ENCODE measurements at regions of chr1 and their contacts with region 1.

Region 1: GRCh38 chr1:205711104-205712020 is 31.1 kb upstream of the SLC45A3 start:
- DNase-seq: peak; percentile 62
- ATAC-seq: peak; percentile 99
- H3K4me3 ChIP-seq: no peak overlapping the region
- H3K27ac ChIP-seq: no peak overlapping the region
- H3K4me1 ChIP-seq: no peaks in the 10 kb centered on the region
- H3K27me3 ChIP-seq: no peaks in the 10 kb centered on the region
- CTCF ChIP-seq: peak; percentile 77 to 95 (median 92)
- EP300 ChIP-seq: no peak
- POLR2A ChIP-seq: no peak
- RAD21 ChIP-seq: peak; percentile 91

Region 2: GRCh38 chr1:205591522-205592351 is 119.6 kb before region 1 on chr1:
- CTCF ChIA-PET with region 1: interaction called, 217 read pairs
- POLR2A ChIA-PET with region 1: interaction called, 6 read pairs
- RAD21 ChIA-PET with region 1: interaction called, 88 read pairs
- SMC1A ChIA-PET with region 1: interaction called, 159 read pairs
- in situ Hi-C with region 1: loop called (anchors 5 kb)
- intact Hi-C with region 1: loop called (anchors 1 kb)
- DNase-seq: peak; percentile 59
- ATAC-seq: peak; percentile 79
- H3K4me3 ChIP-seq: peak overlapping the region; percentile 66; the same call in 1 of the 2 replicates
- H3K27ac ChIP-seq: peak overlapping the region; percentile 71
- H3K4me1 ChIP-seq: peaks cover 36% of the 10 kb centered on the region
- H3K27me3 ChIP-seq: no peaks in the 10 kb centered on the region
- CTCF ChIP-seq: peak; percentile 98 to 99 (median 99); a peak in 5 of 6 replicates
- EP300 ChIP-seq: no peak
- POLR2A ChIP-seq: peak; percentile 69
- RAD21 ChIP-seq: peak; percentile 96

Region 3: DNA sequence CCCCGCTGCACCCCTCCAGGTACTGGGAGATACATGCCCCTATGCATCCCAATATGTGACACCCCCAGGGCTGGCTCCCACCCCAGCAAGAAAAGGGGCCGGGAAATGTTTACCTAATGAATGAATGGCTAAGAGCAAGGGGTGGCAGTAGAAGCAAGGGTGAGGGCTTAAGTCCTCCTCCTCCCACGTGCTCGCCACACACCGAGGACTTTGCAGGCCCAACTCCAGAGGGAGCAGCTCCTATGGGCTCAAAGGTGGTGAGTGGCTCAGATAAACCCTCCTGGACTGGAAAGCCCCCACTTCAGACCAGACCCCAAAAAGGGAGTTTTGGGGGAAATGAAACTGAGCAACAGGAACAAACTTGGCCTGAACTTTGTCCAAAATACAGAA is 42.4 kb before region 1 on chr1:
- CTCF ChIA-PET with region 1: interaction called, 1,339 read pairs
- POLR2A ChIA-PET with region 1: interaction called, 89 read pairs
- RAD21 ChIA-PET with region 1: interaction called, 194 read pairs
- SMC1A ChIA-PET with region 1: interaction called, 1,008 read pairs
- in situ Hi-C with region 1: loop called (anchors 5 kb)
- intact Hi-C with region 1: no loop called
- DNase-seq: peak; percentile 65
- ATAC-seq: peak; percentile 63
- H3K4me3 ChIP-seq: peak overlapping the region; percentile 51; the same call in 1 of the 2 replicates
- H3K27ac ChIP-seq: peak overlapping the region; percentile 71
- H3K4me1 ChIP-seq: peaks cover 80% of the 10 kb centered on the region
- H3K27me3 ChIP-seq: no peaks in the 10 kb centered on the region
- CTCF ChIP-seq: peak in 2 of 3 experiments; percentile 31 to 48; a peak in 3 of 6 replicates
- EP300 ChIP-seq: peak; percentile 22 to 61; a peak in 2 of 4 replicates
- POLR2A ChIP-seq: no peak
- RAD21 ChIP-seq: peak; percentile 30; the same call in 1 of the 2 replicates

Region 4: GRCh38 chr1:205700865-205701401 is 10.4 kb before region 1 on chr1:
- CTCF ChIA-PET with region 1: interaction called, 50 read pairs
- POLR2A ChIA-PET with region 1: no interaction called
- RAD21 ChIA-PET with region 1: interaction called, 11 read pairs
- SMC1A ChIA-PET with region 1: interaction called, 34 read pairs
- in situ Hi-C with region 1: no loop called
- intact Hi-C with region 1: no loop called
- DNase-seq: no peak
- ATAC-seq: no peak
- H3K4me3 ChIP-seq: no peak overlapping the region
- H3K27ac ChIP-seq: no peak overlapping the region
- H3K4me1 ChIP-seq: no peaks in the 10 kb centered on the region
- H3K27me3 ChIP-seq: no peaks in the 10 kb centered on the region
- CTCF ChIP-seq: no peak
- EP300 ChIP-seq: no peak
- POLR2A ChIP-seq: no peak
- RAD21 ChIP-seq: no peak

Region 5: GRCh38 chr1:205739348-205740160 is 28.2 kb after region 1 on chr1:
- CTCF ChIA-PET with region 1: interaction called, 66 read pairs
- POLR2A ChIA-PET with region 1: interaction called, 6 read pairs
- RAD21 ChIA-PET with region 1: interaction called, 6 read pairs
- SMC1A ChIA-PET with region 1: interaction called, 69 read pairs
- in situ Hi-C with region 1: no loop called
- intact Hi-C with region 1: no loop called
- DNase-seq: no peak
- ATAC-seq: no peak
- H3K4me3 ChIP-seq: no peak overlapping the region
- H3K27ac ChIP-seq: no peak overlapping the region
- H3K4me1 ChIP-seq: peaks cover 5% of the 10 kb centered on the region
- H3K27me3 ChIP-seq: no peaks in the 10 kb centered on the region
- CTCF ChIP-seq: no peak
- EP300 ChIP-seq: no peak
- POLR2A ChIP-seq: no peak
- RAD21 ChIP-seq: no peak

Region 6: DNA sequence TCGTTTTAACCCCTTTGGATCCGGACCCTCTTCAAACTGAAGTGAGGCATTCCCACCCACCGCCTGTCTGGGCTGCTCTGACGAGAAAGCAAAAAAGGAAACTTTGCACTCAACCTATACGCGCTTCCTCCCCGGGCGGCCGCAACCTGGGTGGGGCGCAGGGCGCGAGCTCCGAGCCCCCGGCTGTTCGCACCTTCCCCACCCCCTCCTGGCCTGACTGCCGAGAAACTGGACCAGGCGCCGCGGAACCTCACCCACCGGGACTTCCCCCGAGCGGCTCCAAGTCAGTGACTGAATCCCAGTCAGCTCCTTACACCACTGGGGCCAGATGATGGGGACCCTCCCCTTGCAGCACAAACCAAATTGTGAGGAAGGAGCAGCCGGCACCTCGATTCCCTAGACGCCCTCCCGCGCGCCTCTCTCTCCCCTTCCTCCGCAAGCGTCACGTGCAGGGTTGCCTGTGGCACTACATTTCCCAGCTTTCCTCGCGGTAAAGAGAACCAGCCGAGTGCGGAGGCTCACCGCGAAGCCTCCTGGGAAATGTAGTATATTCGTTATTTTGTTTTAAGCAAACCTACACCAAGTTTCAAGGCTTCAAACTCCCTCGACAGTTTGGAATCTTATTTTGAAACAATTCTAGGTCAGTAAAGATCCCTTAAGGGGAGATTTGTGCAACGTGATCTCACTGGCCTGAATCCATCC is 63.8 kb after region 1 on chr1 and contains the start of gene RAB29:
- CTCF ChIA-PET with region 1: interaction called, 25 read pairs
- POLR2A ChIA-PET with region 1: interaction called, 4 read pairs
- RAD21 ChIA-PET with region 1: interaction called, 56 read pairs
- SMC1A ChIA-PET with region 1: interaction called, 28 read pairs
- in situ Hi-C with region 1: no loop called
- intact Hi-C with region 1: no loop called
- DNase-seq: peak; percentile 57
- ATAC-seq: peak; percentile 83
- H3K4me3 ChIP-seq: peak within 1 kb of the TSS; percentile 88
- H3K27ac ChIP-seq: peak within 1 kb of the TSS; percentile 63
- H3K4me1 ChIP-seq: peaks cover 12% of the 10 kb centered on the region
- H3K27me3 ChIP-seq: no peaks in the 10 kb centered on the region
- CTCF ChIP-seq: no peak
- EP300 ChIP-seq: peak in 1 of 2 experiments; percentile 46; a peak in 1 of 4 replicates
- POLR2A ChIP-seq: peak; percentile 50; the same call in 1 of the 2 replicates
- RAD21 ChIP-seq: no peak
- polyA plus RNA-seq, gene RAB29: 12.6 to 16.2 TPM

Region 7: GRCh38 chr1:205919026-205919746 is 207.8 kb after region 1 on chr1:
- CTCF ChIA-PET with region 1: interaction called, 13 read pairs
- POLR2A ChIA-PET with region 1: no interaction called
- RAD21 ChIA-PET with region 1: interaction called, 4 read pairs
- SMC1A ChIA-PET with region 1: interaction called, 11 read pairs
- in situ Hi-C with region 1: no loop called
- intact Hi-C with region 1: no loop called
- DNase-seq: peak; percentile 24
- ATAC-seq: peak; percentile 94
- H3K4me3 ChIP-seq: no peak overlapping the region
- H3K27ac ChIP-seq: no peak overlapping the region
- H3K4me1 ChIP-seq: no peaks in the 10 kb centered on the region; the same call in 1 of the 2 replicates
- H3K27me3 ChIP-seq: peaks cover 2 to 4% of the 10 kb centered on the region in 2 experiments; a peak in 2 of 4 replicates
- CTCF ChIP-seq: peak; percentile 90 to 93 (median 93)
- EP300 ChIP-seq: no peak
- POLR2A ChIP-seq: no peak
- RAD21 ChIP-seq: peak; percentile 91

Measured in GM12878 (cell line).